Heart right ventricle (tissue), 16 donors: ENCODE measurements at regions of chr5 and their contacts with region 1.

Region 1: GRCh38 chr5:80181618-80182211 is 74.1 kb downstream of the SERINC5 start:
- DNase-seq: no peak
- ATAC-seq: peak in 2 of 8 donors; percentile 33 to 73
- H3K4me3 ChIP-seq: no peak overlapping the region
- H3K27ac ChIP-seq: no peak overlapping the region
- H3K4me1 ChIP-seq: peaks cover 6 to 49% (median 36%) of the 10 kb centered on the region in 9 donors
- H3K27me3 ChIP-seq: no peaks in the 10 kb centered on the region
- CTCF ChIP-seq: no peak

Region 2: DNA sequence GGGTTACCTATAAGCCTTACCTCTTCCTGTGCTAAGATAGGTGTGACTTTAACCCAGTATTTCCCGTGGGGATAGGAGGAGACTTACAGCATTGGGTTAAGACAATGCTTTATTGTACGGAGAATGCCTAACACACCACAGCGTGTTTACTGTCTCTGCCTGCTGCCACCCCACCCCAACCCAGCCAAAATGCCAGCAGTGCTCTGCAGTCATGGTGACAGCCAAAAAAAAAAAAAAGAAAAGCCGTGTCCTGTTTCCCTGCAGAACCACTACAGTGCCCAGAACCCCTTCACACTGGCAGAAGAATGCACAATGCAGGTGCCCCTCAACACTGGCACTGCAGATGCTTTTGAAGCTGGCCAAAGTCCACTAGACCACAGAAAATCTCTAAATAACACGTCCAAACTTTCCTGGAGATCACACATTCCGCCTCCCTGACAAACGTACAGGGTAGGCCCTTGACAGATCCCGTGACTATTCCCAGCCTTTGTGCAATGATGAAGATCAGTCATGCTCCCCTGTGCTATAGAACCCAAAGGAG is 28.1 kb before region 1 on chr5:
- intact Hi-C with region 1: loop called in 1 of 10 experiments (anchors 5 kb)
- DNase-seq: no peak
- ATAC-seq: peak; percentile 6 to 75 (median 68)
- H3K4me3 ChIP-seq: no peak overlapping the region
- H3K27ac ChIP-seq: peak overlapping the region in 9 of 10 donors; percentile 13 to 68 (median 48)
- H3K4me1 ChIP-seq: peaks cover 0 to 24% (median 10%) of the 10 kb centered on the region in 9 donors
- H3K27me3 ChIP-seq: no peaks in the 10 kb centered on the region
- CTCF ChIP-seq: no peak